Mammary epithelial cell (primary cell): ENCODE measurements at regions of chr6 and their contacts with region 1.

Region 1: DNA sequence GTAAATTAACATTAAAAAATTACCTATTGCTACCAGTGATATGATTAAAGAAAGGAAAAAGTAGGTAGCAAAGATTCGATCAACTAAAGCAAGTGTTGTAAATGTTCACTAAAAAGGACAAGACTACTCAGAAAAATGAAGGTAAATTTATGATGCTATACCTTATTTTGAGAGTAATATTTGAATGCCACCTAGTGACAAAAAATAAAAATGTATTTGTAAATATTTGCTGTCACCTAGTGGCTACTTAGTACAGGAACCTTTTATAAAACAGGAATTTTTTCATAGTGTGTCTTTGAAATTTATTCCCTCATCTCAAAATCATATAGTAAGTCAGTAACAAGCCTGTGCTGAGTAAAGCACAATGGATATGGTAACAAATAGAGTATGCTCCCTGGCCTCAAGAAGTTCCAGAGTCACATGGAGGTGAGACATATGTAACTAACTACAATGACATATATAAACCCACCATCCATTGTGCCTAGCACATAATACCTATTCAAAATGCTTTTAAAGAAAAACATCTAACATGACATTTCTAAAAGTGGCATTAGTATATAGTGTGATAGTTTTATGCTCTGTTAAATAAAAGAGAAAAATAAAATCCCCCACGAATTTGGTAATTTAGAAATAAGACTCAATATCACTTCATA is 193.1 kb upstream of the SIM1 start:
- DNase-seq: no peak
- H3K4me3 ChIP-seq: no peak overlapping the region
- H3K27ac ChIP-seq: no peak overlapping the region
- H3K4me1 ChIP-seq: peaks cover 2% of the 10 kb centered on the region
- H3K27me3 ChIP-seq: no peaks in the 10 kb centered on the region
- CTCF ChIP-seq: peak; percentile 63 to 64

Region 2: DNA sequence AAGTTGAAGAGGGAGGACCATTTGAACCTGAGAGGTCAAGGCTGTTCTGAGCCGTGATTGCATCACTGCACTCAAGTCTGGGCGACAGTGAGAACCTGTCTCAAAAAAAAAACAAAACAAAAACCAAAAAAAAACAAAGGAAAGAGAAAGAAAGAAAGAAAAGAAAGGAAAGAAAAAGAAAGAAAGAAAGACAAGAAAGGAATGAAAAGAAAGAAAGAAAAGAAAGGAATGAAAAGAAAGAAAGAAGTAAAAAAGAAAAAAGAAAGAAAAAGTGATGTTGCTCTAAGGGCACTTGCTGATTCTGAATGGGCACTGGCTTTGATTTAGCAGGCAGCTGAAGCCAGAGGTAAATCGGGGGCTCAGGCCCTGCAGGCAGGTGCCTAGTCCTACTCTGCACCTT is 824.8 kb before region 1 on chr6:
- CTCF ChIA-PET with region 1: no interaction called
- dilution Hi-C with region 1: no loop called
- in situ Hi-C with region 1: no loop called
- intact Hi-C with region 1: no loop called
- DNase-seq: no peak
- H3K4me3 ChIP-seq: no peak overlapping the region
- H3K27ac ChIP-seq: no peak overlapping the region
- H3K4me1 ChIP-seq: peaks cover 8% of the 10 kb centered on the region
- H3K27me3 ChIP-seq: no peaks in the 10 kb centered on the region
- CTCF ChIP-seq: no peak

Region 3: GRCh38 chr6:100105138-100105753 is 552.6 kb before region 1 on chr6:
- CTCF ChIA-PET with region 1: no interaction called
- dilution Hi-C with region 1: no loop called
- in situ Hi-C with region 1: loop called (anchors 10 to 25 kb)
- intact Hi-C with region 1: loop called (anchors 2 kb)
- DNase-seq: no peak
- H3K4me3 ChIP-seq: no peak overlapping the region
- H3K27ac ChIP-seq: no peak overlapping the region
- H3K4me1 ChIP-seq: no peaks in the 10 kb centered on the region
- H3K27me3 ChIP-seq: peaks cover 3% of the 10 kb centered on the region
- CTCF ChIP-seq: no peak

Region 4: DNA sequence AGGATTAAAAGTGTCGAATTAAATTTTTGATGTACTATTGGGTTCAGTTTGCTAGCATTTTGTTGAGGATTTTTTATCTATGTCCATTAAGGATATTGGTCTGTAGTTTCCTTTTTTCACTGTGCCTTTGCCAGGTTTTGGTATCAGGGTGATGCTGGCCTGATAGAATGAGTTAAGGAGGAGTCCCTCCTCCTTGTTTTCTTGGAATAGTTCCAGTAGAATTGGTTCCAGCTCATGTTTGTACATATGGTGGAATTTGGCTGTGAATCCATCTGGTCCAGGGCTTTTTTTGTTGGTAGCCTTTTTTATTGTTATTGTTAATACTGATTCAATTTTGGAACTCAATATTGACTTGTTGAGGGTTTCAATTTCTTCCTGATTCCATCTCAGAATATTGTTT is 334.9 kb before region 1 on chr6:
- CTCF ChIA-PET with region 1: no interaction called
- dilution Hi-C with region 1: no loop called
- in situ Hi-C with region 1: no loop called
- intact Hi-C with region 1: loop called (anchors 1 kb)
- DNase-seq: no peak
- H3K4me3 ChIP-seq: no peak overlapping the region
- H3K27ac ChIP-seq: no peak overlapping the region
- H3K4me1 ChIP-seq: no peaks in the 10 kb centered on the region
- H3K27me3 ChIP-seq: no peaks in the 10 kb centered on the region
- CTCF ChIP-seq: no peak

Region 5: DNA sequence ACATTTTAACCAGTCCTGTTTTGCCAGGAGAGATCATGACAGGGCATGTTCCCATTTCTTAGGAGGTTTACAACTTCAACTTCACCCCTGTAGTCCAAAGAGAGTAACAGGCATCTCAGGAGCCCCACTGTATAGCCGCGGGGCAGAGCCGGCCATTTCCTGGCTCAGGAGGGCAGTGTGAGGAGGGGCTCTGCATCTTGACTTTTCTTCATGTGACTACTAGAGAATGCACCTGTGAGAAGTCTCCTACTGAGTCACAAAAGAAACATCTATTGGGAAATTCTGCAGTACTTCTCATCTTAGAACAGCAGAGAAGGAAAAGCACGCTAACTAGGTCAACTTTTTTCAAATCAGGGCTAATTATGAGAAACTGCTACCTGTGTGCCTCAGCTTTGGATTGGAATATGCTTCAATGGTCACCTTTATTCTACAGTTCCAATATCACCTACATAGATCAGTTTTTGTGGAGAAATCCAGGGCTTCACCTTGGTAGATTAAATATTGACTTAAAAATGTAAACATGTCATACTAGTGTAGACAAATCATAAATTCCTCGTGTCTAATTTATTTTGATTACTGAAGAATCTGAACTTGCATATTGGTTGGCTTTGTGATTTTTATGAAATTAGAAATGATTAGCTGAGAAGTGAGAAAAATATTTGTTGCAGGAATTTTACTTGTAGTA is 164.4 kb before region 1 on chr6:
- CTCF ChIA-PET with region 1: no interaction called
- dilution Hi-C with region 1: no loop called
- in situ Hi-C with region 1: loop called in 1 of 2 experiments (anchors 10 kb)
- intact Hi-C with region 1: loop called (anchors 5 kb)
- DNase-seq: peak; percentile 90
- H3K4me3 ChIP-seq: no peak overlapping the region
- H3K27ac ChIP-seq: peak overlapping the region; percentile 13
- H3K4me1 ChIP-seq: peaks cover 21% of the 10 kb centered on the region
- H3K27me3 ChIP-seq: no peaks in the 10 kb centered on the region
- CTCF ChIP-seq: no peak